ENCODE measurements at regions of chr11 and their contacts with region 1.

Region 1: DNA sequence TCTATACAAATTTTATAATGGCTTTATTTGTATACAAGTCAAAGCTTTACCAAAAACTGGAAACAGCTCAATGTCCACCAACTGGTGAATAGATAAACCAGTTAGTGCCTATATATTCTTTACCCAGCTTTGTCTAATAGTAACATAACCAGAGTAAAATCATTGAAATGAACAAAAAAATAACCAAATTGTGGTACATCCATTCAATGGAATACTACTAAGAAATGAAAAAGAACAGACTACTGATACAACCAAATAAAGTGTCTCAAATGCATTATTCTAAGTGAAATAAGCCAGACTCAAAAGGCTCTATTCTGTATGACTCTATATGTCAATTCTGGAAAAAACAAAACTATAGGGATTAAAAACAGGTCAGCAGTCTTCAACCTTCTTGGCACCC is 40.9 kb upstream of the LDLRAD3 start:
- DNase-seq: no peak
- ATAC-seq: no peak
- H3K4me3 ChIP-seq: no peak overlapping the region
- H3K27ac ChIP-seq: no peak overlapping the region
- H3K4me1 ChIP-seq: peaks cover 0 to 13% of the 10 kb centered on the region in 2 donors
- H3K27me3 ChIP-seq: no peaks in the 10 kb centered on the region
- CTCF ChIP-seq: no peak

Region 2: GRCh38 chr11:35969089-35970042 is 66.4 kb after region 1 on chr11:
- intact Hi-C with region 1: no loop called
- DNase-seq: peak in 2 of 4 donors; percentile 43 to 45
- ATAC-seq: peak; percentile 76
- H3K4me3 ChIP-seq: no peak overlapping the region
- H3K27ac ChIP-seq: no peak overlapping the region
- H3K4me1 ChIP-seq: no peaks in the 10 kb centered on the region
- H3K27me3 ChIP-seq: no peaks in the 10 kb centered on the region
- CTCF ChIP-seq: no peak

Region 3: GRCh38 chr11:36027731-36028130 is 124.8 kb after region 1 on chr11:
- intact Hi-C with region 1: loop called in 1 of 2 experiments (anchors 5 kb)
- DNase-seq: no peak
- ATAC-seq: peak; percentile 33
- H3K4me3 ChIP-seq: no peak overlapping the region
- H3K27ac ChIP-seq: no peak overlapping the region
- H3K4me1 ChIP-seq: no peaks in the 10 kb centered on the region
- H3K27me3 ChIP-seq: no peaks in the 10 kb centered on the region
- CTCF ChIP-seq: no peak